ENCODE measurements at regions of chr19 and their contacts with region 1.

Region 1: GRCh38 chr19:16771618-16772017 is 52.0 kb downstream of the NWD1 start:
- DNase-seq: peak; percentile 43 to 52
- ATAC-seq: peak; percentile 60 to 86
- H3K4me3 ChIP-seq: no peak overlapping the region
- H3K27ac ChIP-seq: no peak overlapping the region
- H3K4me1 ChIP-seq: no peaks in the 10 kb centered on the region
- H3K27me3 ChIP-seq: no peaks in the 10 kb centered on the region
- CTCF ChIP-seq: peak; percentile 55 to 85 (median 73)
- POLR2A ChIP-seq: no peak

Region 2: GRCh38 chr19:16795721-16796120 is 24.1 kb after region 1 on chr19:
- in situ Hi-C with region 1: no loop called
- intact Hi-C with region 1: no loop called
- DNase-seq: no peak
- ATAC-seq: no peak
- H3K4me3 ChIP-seq: no peak overlapping the region
- H3K27ac ChIP-seq: no peak overlapping the region
- H3K4me1 ChIP-seq: no peaks in the 10 kb centered on the region
- H3K27me3 ChIP-seq: no peaks in the 10 kb centered on the region
- CTCF ChIP-seq: no peak
- POLR2A ChIP-seq: no peak

Region 3: DNA sequence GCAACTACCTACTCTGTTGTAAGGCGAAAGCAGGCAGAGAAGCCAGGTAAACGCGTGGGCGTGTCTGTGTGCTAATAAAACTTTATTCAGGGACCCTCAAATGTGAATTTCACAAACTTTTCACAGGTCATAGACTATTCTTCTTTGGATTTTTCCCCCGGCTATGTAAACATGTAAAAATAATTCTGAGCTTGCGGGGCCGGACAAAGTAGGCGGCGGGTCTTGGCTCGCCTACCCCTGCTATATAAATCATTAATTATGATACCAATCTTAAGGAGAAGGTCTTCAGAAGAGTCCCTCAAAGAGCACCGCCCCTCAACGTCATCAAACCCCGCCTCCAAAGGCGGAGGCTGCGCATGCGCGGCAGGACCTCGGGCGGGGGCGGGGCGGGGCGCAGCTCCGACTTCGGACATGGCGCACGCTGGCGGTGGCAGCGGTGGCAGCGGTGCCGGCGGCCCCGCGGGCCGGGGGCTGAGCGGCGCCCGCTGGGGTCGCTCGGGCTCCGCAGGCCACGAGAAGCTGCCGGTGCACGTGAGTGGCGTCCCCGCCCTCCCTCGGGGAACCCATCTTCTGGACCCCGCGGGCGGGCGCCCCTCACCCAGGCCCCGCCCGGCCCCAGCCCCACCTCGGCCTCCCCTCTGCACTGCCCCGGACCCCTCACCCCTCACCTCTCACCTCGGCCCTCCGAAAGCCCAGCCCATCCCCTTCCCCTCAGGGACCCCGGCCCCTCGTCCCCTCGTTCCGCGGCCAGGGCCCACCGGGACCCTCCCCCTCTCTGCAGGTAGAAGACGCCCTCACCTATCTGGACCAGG is 57.6 kb after region 1 on chr19 and contains the start of gene SIN3B:
- in situ Hi-C with region 1: no loop called
- intact Hi-C with region 1: loop called (anchors 2 kb)
- DNase-seq: peak; percentile 69 to 78
- ATAC-seq: peak; percentile 94 to 95
- H3K4me3 ChIP-seq: peak within 1 kb of the TSS; percentile 64 to 96 (median 80)
- H3K27ac ChIP-seq: peak within 1 kb of the TSS; percentile 84 to 90 (median 86)
- H3K4me1 ChIP-seq: peaks cover 18 to 25% of the 10 kb centered on the region in 2 donors
- H3K27me3 ChIP-seq: no peaks in the 10 kb centered on the region
- CTCF ChIP-seq: peak in 1 of 5 experiments; percentile 9
- POLR2A ChIP-seq: peak; percentile 59 to 72
- total RNA-seq, gene SIN3B: 11.6 to 15.2 (median 14.3) TPM

Region 4: GRCh38 chr19:17025991-17026658 is 254.5 kb after region 1 on chr19:
- in situ Hi-C with region 1: loop called in 2 of 4 experiments (anchors 25 kb)
- intact Hi-C with region 1: no loop called
- DNase-seq: no peak
- ATAC-seq: no peak
- H3K4me3 ChIP-seq: peak overlapping the region in 3 of 4 donors; percentile 31 to 49 (median 41)
- H3K27ac ChIP-seq: peak overlapping the region in 1 of 4 donors; percentile 34
- H3K4me1 ChIP-seq: no peaks in the 10 kb centered on the region
- H3K27me3 ChIP-seq: peaks cover 34 to 51% (median 41%) of the 10 kb centered on the region in 3 donors
- CTCF ChIP-seq: no peak
- POLR2A ChIP-seq: no peak

Region 5: GRCh38 chr19:17052439-17053210 is 281.0 kb after region 1 on chr19:
- in situ Hi-C with region 1: loop called in 3 of 4 experiments (anchors 10 to 25 kb)
- intact Hi-C with region 1: loop called (anchors 2 kb)
- DNase-seq: no peak
- ATAC-seq: peak in 1 of 2 donors; percentile 51
- H3K4me3 ChIP-seq: no peak overlapping the region
- H3K27ac ChIP-seq: no peak overlapping the region
- H3K4me1 ChIP-seq: no peaks in the 10 kb centered on the region
- H3K27me3 ChIP-seq: no peaks in the 10 kb centered on the region
- CTCF ChIP-seq: peak in 4 of 5 experiments; percentile 16 to 55 (median 42)
- POLR2A ChIP-seq: no peak

Region 6: DNA sequence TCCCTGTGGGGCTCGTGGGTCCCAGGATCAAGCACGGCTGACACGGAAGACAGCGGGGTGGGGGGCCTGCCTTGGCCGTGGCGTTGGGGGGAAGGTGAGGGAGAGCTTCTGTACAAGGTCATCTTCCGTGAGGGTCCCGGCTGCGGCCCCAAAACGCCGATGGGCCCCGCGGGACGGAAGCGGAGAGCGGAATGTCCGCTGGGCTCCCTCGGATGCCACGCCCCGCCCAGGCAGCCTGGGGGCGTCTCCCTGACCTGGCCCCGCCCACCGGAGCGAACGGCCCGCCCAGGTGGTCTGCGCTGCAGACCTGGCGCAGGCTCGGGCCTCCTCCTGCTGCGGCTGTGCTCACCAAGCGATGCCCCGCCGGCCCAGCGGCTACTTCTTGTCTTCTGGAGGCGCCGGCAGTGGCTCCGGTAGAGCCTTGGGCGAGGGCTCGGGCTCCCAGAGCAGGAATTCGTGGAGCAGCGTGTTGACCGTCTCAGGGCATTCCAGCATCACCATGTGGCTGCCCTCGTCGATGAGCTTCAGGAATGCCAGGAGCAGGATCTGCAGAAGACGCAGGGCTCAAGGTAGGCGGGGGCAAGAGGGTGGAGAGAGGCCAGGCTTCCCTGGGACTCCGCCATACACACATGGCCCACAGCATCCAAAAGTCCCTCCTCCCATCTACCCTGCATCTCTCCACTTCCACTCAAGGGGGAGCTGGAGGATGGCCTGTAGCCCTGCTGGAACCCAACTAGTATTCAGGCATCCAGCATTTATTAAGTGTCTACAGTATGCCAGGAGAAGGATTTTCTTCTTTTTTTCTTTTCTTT is 520.9 kb after region 1 on chr19:
- in situ Hi-C with region 1: loop called in 1 of 4 experiments (anchors 25 kb)
- intact Hi-C with region 1: no loop called
- DNase-seq: peak in 1 of 2 donors; percentile 20
- ATAC-seq: peak; percentile 64 to 74
- H3K4me3 ChIP-seq: peak overlapping the region; percentile 33 to 52 (median 51)
- H3K27ac ChIP-seq: peak overlapping the region in 3 of 4 donors; percentile 32 to 50 (median 32)
- H3K4me1 ChIP-seq: peaks cover 0 to 11% of the 10 kb centered on the region in 2 donors
- H3K27me3 ChIP-seq: no peaks in the 10 kb centered on the region
- CTCF ChIP-seq: peak in 3 of 5 experiments; percentile 39 to 61 (median 44)
- POLR2A ChIP-seq: no peak